Kidney (tissue), 22 donors: ENCODE measurements at regions of chr3 and their contacts with region 1.

Region 1: DNA sequence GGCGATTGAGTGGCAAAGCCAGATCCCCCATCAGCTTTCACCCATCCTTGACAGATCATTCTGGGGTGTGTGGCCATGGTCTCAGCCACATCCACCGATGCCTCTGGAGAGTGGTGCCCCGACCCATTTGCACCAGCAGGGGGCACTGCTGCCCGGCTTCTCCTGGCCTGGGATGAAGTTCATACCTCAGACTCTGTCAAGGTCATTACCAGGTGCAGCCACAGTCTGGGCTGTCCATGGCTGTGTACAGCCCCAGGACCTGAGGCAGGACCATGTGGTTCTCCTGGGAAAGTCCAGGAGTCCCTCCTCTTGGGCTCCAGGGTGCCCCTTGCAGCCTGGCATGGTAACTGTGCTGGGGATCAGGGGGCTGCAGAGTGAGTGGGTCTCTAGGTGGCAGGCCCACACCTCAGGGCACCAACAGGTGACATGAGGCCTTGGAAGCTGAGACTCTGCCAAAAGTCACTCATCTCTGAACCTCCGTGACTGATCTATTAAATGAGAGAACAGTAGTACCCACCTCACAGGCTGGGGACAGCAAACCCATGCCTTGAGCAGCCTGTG is 67.2 kb downstream of the CACNA2D2 start:
- DNase-seq: peak in 4 of 5 donors; percentile 72 to 90 (median 81)
- H3K4me3 ChIP-seq: no peak overlapping the region
- H3K27ac ChIP-seq: no peak overlapping the region
- H3K4me1 ChIP-seq: no peaks in the 10 kb centered on the region
- H3K27me3 ChIP-seq: no peaks in the 10 kb centered on the region
- CTCF ChIP-seq: peak; percentile 44

Region 2: GRCh38 chr3:50450209-50450921 is 14.2 kb after region 1 on chr3:
- intact Hi-C with region 1: no loop called
- DNase-seq: peak; percentile 79 to 91 (median 88)
- H3K4me3 ChIP-seq: peak overlapping the region in 1 of 3 donors; percentile 30
- H3K27ac ChIP-seq: no peak overlapping the region
- H3K4me1 ChIP-seq: no peaks in the 10 kb centered on the region
- H3K27me3 ChIP-seq: no peaks in the 10 kb centered on the region
- CTCF ChIP-seq: no peak

Region 3: DNA sequence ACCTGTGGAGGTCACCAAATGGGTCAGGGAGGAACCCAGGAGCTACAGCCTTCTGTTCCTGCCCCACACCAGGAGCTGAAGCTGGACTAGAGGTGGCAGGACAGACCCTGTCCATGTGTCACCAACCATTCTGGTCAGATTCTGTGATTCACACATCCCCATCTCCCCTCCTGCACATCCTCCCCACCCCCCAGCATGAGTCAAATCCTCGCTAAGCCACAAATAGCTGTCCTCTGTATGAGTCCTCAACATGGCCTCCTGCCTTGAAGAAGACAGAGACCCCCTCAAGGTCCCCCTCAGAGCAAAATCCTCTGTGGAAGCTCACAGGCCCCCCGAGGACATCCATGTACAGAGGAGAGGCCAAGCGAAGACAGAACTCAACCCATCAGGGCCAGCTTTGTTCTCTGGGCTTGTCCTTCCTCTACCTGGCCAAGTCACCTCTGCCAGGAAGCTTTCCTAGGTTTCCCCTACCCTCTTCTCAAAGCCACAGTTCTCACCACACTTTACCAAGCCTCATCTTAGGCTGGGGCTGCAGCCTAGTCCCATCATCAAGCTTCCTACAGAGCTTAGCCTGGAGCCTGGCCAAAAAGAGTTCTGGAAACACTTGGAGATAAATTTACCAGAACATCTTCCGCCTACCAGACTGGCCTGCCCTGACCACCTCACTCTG is 50.2 kb after region 1 on chr3:
- intact Hi-C with region 1: no loop called
- DNase-seq: no peak
- H3K4me3 ChIP-seq: no peak overlapping the region
- H3K27ac ChIP-seq: no peak overlapping the region
- H3K4me1 ChIP-seq: no peaks in the 10 kb centered on the region
- H3K27me3 ChIP-seq: no peaks in the 10 kb centered on the region
- CTCF ChIP-seq: no peak

Region 4: GRCh38 chr3:50550079-50550741 is 114.0 kb after region 1 on chr3:
- intact Hi-C with region 1: loop called (anchors 10 kb)
- DNase-seq: peak in 4 of 5 donors; percentile 59 to 82 (median 78)
- H3K4me3 ChIP-seq: no peak overlapping the region
- H3K27ac ChIP-seq: no peak overlapping the region
- H3K4me1 ChIP-seq: no peaks in the 10 kb centered on the region
- H3K27me3 ChIP-seq: no peaks in the 10 kb centered on the region
- CTCF ChIP-seq: peak; percentile 69